A673 (cell line): ENCODE measurements at regions of chr15 and their contacts with region 1.

Region 1: DNA sequence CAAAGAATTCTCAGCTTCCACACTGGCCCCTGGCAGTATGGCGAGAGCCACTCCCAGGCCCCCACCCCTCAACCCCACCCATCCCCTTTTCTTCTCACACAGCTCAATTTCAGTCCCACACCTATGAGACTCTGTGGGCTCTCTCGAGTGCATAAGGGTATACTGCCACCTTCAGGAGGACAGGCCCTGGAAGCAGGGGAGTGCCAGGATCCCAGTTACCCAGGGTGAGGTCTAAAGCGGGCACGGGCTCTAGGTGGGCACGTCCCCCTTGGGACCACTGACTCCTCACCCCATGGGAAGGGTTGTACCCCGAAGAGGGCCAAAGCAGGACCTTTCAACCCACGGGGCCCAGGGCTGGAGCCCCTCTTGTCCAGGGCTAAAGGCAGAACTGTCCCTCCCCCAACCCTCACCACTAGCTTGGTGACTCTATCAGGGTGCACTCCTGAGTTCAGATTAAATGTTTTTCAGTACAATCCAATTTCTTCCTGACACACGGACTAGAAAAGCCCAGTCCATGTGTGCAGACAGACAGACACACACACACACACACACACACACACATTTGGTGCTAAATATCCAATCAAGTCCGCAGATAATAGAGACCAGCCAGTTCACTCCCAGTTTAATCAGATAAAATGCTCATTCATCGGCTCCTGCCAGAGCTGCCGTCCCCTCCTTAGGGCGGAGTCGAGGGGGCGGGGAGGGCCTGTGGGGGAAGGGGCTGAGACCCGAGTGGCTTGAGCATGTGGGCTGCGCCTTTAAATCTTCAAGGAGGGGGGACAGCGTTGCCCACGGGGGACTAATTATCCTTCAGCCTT is 59.4 kb downstream of the CYP11A1 start:
- DNase-seq: peak; percentile 86
- H3K4me3 ChIP-seq: no peak overlapping the region
- H3K27ac ChIP-seq: no peak overlapping the region
- H3K4me1 ChIP-seq: peaks cover 28% of the 10 kb centered on the region
- H3K27me3 ChIP-seq: no peaks in the 10 kb centered on the region
- CTCF ChIP-seq: peak; percentile 85

Region 2: GRCh38 chr15:74047781-74048180 is 260.3 kb before region 1 on chr15:
- CTCF ChIA-PET with region 1: interaction called, 13 read pairs
- POLR2A ChIA-PET with region 1: no interaction called
- intact Hi-C with region 1: no loop called
- DNase-seq: no peak
- H3K4me3 ChIP-seq: no peak overlapping the region
- H3K27ac ChIP-seq: no peak overlapping the region
- H3K4me1 ChIP-seq: no peaks in the 10 kb centered on the region
- H3K27me3 ChIP-seq: no peaks in the 10 kb centered on the region
- CTCF ChIP-seq: no peak

Region 3: GRCh38 chr15:74322181-74323076 is 14.4 kb after region 1 on chr15:
- CTCF ChIA-PET with region 1: interaction called, 12 read pairs
- POLR2A ChIA-PET with region 1: interaction called, 9 read pairs
- intact Hi-C with region 1: no loop called
- DNase-seq: peak; percentile 76
- H3K4me3 ChIP-seq: no peak overlapping the region
- H3K27ac ChIP-seq: no peak overlapping the region
- H3K4me1 ChIP-seq: peaks cover 29% of the 10 kb centered on the region
- H3K27me3 ChIP-seq: no peaks in the 10 kb centered on the region
- CTCF ChIP-seq: peak; percentile 92